ENCODE measurements at regions of chr2 and their contacts with region 1.

Region 1: DNA sequence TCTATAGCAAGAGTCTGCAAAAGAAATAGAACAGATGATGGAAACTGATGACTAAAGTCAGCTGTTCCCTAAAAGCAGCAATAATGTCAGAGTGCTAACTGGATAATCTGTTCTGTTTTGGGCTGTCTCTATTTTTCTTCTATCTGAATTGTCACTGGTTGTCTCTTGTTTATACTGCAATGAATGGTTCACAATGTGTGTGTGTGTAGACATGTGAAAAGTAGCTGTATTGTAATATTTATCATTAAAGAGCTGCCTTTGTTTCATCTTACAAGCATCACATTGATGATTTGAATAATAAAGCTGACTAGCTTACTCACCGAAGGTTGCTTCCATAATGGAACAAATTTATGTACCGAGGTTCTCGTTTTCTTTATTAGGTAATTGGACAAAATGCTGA is 456.0 kb upstream of the ZEB2 start:
- DNase-seq: no peak
- H3K4me3 ChIP-seq: peak overlapping the region in 6 of 59 donors; percentile 4 to 34 (median 17)
- H3K27ac ChIP-seq: peak overlapping the region in 58 of 59 donors; percentile 58 to 99 (median 91)
- H3K27me3 ChIP-seq: no peaks in the 10 kb centered on the region
- CTCF ChIP-seq: peak in 1 of 56 donors; percentile 10

Region 2: DNA sequence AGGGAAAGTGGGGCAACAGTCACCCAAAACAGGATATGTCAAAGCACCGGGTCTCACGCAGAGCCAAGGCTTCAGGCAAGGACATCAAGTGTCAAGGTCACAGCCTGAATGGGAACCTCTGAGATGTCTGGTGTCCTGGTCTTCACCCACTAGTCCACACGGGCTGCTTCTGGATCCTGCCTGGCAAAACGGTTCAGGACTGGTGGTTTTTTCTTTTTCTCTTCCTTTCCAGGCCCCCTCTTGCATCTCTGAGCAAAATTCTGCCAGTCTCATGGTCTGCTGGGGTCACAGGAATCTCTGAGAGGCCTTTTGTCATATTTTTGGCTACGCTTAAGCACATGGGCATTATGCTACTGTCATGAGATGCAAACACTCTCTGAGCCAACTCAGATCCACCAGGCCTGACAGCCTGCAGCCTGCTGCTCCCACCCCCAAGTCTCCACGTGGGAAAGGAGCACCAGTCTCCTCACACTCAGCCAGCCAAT is 62.2 kb after region 1 on chr2:
- intact Hi-C with region 1: loop called (anchors 5 kb)
- DNase-seq: peak in 9 of 10 donors; percentile 33 to 71 (median 55)
- H3K4me3 ChIP-seq: peak overlapping the region in 37 of 59 donors; percentile 0 to 51 (median 31)
- H3K27ac ChIP-seq: peak overlapping the region in 58 of 59 donors; percentile 67 to 96 (median 88)
- H3K27me3 ChIP-seq: no peaks in the 10 kb centered on the region
- CTCF ChIP-seq: no peak

Region 3: GRCh38 chr2:145043399-145043834 is 67.5 kb after region 1 on chr2:
- intact Hi-C with region 1: loop called (anchors 5 kb)
- DNase-seq: peak in 9 of 10 donors; percentile 44 to 89 (median 72)
- H3K4me3 ChIP-seq: no peak overlapping the region
- H3K27ac ChIP-seq: peak overlapping the region in 55 of 59 donors; percentile 18 to 90 (median 75)
- H3K27me3 ChIP-seq: no peaks in the 10 kb centered on the region
- CTCF ChIP-seq: peak in 54 of 56 donors; percentile 17 to 76 (median 52)